ENCODE measurements at regions of chr14 and their contacts with region 1.

Region 1: GRCh38 chr14:74478996-74479635 is 14.0 kb downstream of the NPC2 start:
- DNase-seq: no peak
- H3K4me3 ChIP-seq: no peak overlapping the region
- H3K27ac ChIP-seq: no peak overlapping the region
- H3K4me1 ChIP-seq: peaks cover 0 to 3% (median 0%) of the 10 kb centered on the region in 4 experiments; a peak in 2 of 7 replicates
- H3K27me3 ChIP-seq: no peaks in the 10 kb centered on the region
- CTCF ChIP-seq: peak in 2 of 3 experiments; percentile 92 to 93; a peak in 3 of 4 replicates
- EP300 ChIP-seq: no peak
- POLR2A ChIP-seq: no peak
- RAD21 ChIP-seq: peak; percentile 100

Region 2: DNA sequence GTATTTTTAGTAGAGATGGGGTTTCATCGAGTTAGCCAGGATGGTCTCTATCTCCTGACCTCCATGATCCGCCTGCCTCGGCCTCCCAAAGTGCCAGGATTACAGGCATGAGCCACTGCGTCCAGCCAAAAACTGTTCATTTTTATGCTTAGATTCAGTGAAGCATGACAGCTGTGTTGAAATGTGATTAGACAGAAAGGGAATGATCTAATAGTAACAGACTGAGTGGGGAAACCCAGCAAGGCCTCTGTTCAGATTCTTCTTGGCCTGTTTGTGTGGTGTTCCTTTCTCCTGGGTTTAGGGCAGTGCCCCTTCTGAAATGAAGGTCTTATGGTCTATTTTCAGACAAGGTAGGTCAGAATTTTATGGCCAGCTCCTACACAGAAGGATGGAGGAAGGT is 164.5 kb before region 1 on chr14:
- CTCF ChIA-PET with region 1: interaction called, 13 read pairs
- POLR2A ChIA-PET with region 1: no interaction called
- DNase-seq: no peak
- H3K4me3 ChIP-seq: no peak overlapping the region
- H3K27ac ChIP-seq: no peak overlapping the region
- H3K4me1 ChIP-seq: no peaks in the 10 kb centered on the region
- H3K27me3 ChIP-seq: no peaks in the 10 kb centered on the region
- CTCF ChIP-seq: no peak
- EP300 ChIP-seq: no peak
- POLR2A ChIP-seq: no peak
- RAD21 ChIP-seq: no peak

Region 3: DNA sequence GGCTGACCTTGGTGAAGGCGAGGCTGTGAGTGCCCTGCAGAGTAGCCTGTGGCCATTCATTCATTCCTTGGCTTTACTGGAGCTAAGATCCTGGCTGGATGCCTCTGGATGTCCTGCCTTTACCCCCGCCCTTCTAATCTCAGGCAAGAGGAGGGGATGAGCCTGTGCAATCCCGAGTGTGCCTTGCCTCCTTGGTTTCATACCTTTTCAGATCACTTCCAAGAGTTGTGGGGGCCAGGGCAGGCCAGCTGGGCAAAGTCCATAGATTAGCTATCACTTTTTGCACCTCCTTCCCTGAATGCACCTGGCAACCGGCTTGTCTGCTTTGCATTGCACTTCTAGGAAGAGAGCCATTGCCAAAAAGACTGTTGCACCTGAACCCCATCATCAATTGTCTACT is 129.4 kb before region 1 on chr14:
- CTCF ChIA-PET with region 1: interaction called, 49 read pairs
- POLR2A ChIA-PET with region 1: interaction called, 5 read pairs
- DNase-seq: no peak
- H3K4me3 ChIP-seq: peak overlapping the region; percentile 87 to 98 (median 90)
- H3K27ac ChIP-seq: peak overlapping the region; percentile 92; the same call in 1 of the 2 replicates
- H3K4me1 ChIP-seq: peaks cover 4 to 20% (median 12%) of the 10 kb centered on the region in 4 experiments
- H3K27me3 ChIP-seq: no peaks in the 10 kb centered on the region
- CTCF ChIP-seq: no peak
- EP300 ChIP-seq: no peak
- POLR2A ChIP-seq: no peak
- RAD21 ChIP-seq: no peak

Region 4: GRCh38 chr14:74395094-74395493 is 84.0 kb before region 1 on chr14:
- CTCF ChIA-PET with region 1: interaction called, 22 read pairs
- POLR2A ChIA-PET with region 1: interaction called, 3 read pairs
- DNase-seq: no peak
- H3K4me3 ChIP-seq: no peak overlapping the region
- H3K27ac ChIP-seq: no peak overlapping the region
- H3K4me1 ChIP-seq: peaks cover 0 to 4% (median 0%) of the 10 kb centered on the region in 4 experiments; a peak in 3 of 7 replicates
- H3K27me3 ChIP-seq: peaks cover 0 to 2% (median 0%) of the 10 kb centered on the region in 4 experiments; a peak in 1 of 7 replicates
- CTCF ChIP-seq: no peak
- EP300 ChIP-seq: no peak
- POLR2A ChIP-seq: no peak
- RAD21 ChIP-seq: no peak

Region 5: GRCh38 chr14:74414403-74415114 is 64.6 kb before region 1 on chr14:
- CTCF ChIA-PET with region 1: interaction called, 13 read pairs
- POLR2A ChIA-PET with region 1: no interaction called
- DNase-seq: no peak
- H3K4me3 ChIP-seq: peak overlapping the region in 1 of 4 experiments; percentile 5; a peak in 1 of 8 replicates
- H3K27ac ChIP-seq: no peak overlapping the region
- H3K4me1 ChIP-seq: peaks cover 11 to 31% (median 19%) of the 10 kb centered on the region in 4 experiments
- H3K27me3 ChIP-seq: no peaks in the 10 kb centered on the region
- CTCF ChIP-seq: no peak
- EP300 ChIP-seq: no peak
- POLR2A ChIP-seq: no peak
- RAD21 ChIP-seq: no peak

Region 6: DNA sequence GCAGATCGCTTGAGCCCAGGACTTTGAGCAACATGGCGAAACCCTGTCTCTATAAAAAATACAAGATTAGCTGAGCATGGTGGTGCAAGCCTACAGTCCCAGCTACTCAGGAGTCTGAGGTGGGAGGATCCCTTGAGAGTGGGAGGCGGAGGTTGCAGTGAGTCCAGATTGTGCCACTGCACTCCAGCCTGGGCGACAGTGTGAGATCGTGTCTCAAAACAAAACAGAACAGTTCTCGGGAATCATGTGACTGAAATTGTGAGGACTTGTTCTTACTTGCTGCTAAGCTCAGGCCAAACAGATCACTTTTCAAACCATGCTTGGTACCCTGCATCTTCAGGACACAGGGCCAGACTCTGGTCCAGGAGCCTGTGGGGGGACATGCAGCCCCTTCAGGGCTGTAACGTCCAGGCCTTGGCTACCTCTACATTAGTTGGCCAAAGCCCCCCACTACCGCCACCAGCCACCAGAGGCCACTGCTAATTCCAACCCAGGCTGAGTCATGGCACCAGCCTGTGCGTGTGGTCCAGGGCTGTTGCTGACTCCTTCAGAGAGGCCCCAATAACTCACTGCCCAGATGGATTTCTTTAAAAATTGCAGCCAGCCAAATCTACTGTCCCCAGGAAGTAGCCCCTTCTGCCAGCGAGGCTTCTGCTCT is 19.7 kb before region 1 on chr14:
- CTCF ChIA-PET with region 1: interaction called, 181 read pairs
- POLR2A ChIA-PET with region 1: interaction called, 4 read pairs
- DNase-seq: peak; percentile 33 to 84
- H3K4me3 ChIP-seq: no peak overlapping the region
- H3K27ac ChIP-seq: no peak overlapping the region
- H3K4me1 ChIP-seq: peaks cover 0 to 3% (median 2%) of the 10 kb centered on the region in 4 experiments; a peak in 5 of 7 replicates
- H3K27me3 ChIP-seq: no peaks in the 10 kb centered on the region
- CTCF ChIP-seq: peak; percentile 68 to 89 (median 87)
- EP300 ChIP-seq: no peak
- POLR2A ChIP-seq: no peak
- RAD21 ChIP-seq: peak; percentile 38 to 69; a peak in 3 of 4 replicates

Region 7: GRCh38 chr14:74508292-74508731 is 29.2 kb after region 1 on chr14:
- CTCF ChIA-PET with region 1: interaction called, 12 read pairs
- POLR2A ChIA-PET with region 1: no interaction called
- DNase-seq: no peak
- H3K4me3 ChIP-seq: no peak overlapping the region
- H3K27ac ChIP-seq: no peak overlapping the region
- H3K4me1 ChIP-seq: peaks cover 0 to 19% (median 11%) of the 10 kb centered on the region in 4 experiments; a peak in 5 of 7 replicates
- H3K27me3 ChIP-seq: no peaks in the 10 kb centered on the region; a peak in 1 of 7 replicates
- CTCF ChIP-seq: peak in 2 of 3 experiments; percentile 99 to 100; a peak in 3 of 4 replicates
- EP300 ChIP-seq: no peak
- POLR2A ChIP-seq: no peak
- RAD21 ChIP-seq: peak; percentile 60 to 74

Region 8: GRCh38 chr14:74558655-74559054 is 79.5 kb after region 1 on chr14:
- CTCF ChIA-PET with region 1: no interaction called
- POLR2A ChIA-PET with region 1: no interaction called
- DNase-seq: no peak
- H3K4me3 ChIP-seq: no peak overlapping the region
- H3K27ac ChIP-seq: no peak overlapping the region
- H3K4me1 ChIP-seq: peaks cover 0 to 5% (median 1%) of the 10 kb centered on the region in 4 experiments; a peak in 4 of 7 replicates
- H3K27me3 ChIP-seq: no peaks in the 10 kb centered on the region
- CTCF ChIP-seq: no peak
- EP300 ChIP-seq: no peak
- POLR2A ChIP-seq: no peak
- RAD21 ChIP-seq: no peak

Region 9: DNA sequence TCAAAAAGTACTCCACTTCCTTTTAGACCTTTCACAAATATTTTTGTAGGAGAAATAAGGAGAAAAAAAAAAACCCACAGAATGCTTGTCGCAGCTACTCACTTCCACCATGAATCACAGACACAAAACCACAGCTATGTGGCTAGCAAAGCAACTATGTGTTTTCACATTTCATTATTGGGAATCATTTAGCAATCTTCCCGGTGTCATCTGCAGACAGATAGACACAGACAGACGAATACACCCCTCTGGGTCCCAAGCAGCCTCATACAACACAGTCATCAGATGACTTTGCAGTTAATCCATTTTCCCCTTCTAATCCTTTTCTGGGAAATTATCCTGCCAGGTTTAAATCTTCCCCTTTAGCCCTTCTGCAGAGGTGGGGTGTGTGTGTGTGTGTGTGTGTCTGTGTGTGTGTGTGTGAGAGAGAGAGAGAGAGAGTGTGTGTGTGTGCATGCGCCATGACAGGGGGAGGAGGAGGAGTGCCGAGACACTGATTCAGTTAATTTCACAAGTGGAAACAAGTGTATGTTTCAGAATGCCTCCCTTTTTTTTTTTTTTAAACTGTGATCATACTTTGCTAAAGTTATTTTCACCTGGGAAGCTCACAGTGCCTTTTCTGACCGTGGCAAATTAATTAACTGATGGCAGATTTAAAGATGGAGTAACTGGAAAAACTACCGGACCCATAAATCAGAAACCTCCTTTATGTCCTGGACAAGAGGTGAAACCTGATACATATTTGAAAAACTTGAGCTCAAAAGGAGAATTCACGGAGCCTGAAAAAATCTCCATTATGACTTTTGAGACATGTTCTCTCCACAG is 93.0 kb after region 1 on chr14:
- CTCF ChIA-PET with region 1: no interaction called
- POLR2A ChIA-PET with region 1: no interaction called
- DNase-seq: no peak
- H3K4me3 ChIP-seq: no peak overlapping the region
- H3K27ac ChIP-seq: no peak overlapping the region
- H3K4me1 ChIP-seq: peaks cover 0 to 7% (median 5%) of the 10 kb centered on the region in 4 experiments; a peak in 5 of 7 replicates
- H3K27me3 ChIP-seq: no peaks in the 10 kb centered on the region
- CTCF ChIP-seq: no peak
- EP300 ChIP-seq: no peak
- POLR2A ChIP-seq: no peak
- RAD21 ChIP-seq: no peak

Measured in H1 (cell line).